ENCODE measurements at regions of chr6 and their contacts with region 1.

Region 1: DNA sequence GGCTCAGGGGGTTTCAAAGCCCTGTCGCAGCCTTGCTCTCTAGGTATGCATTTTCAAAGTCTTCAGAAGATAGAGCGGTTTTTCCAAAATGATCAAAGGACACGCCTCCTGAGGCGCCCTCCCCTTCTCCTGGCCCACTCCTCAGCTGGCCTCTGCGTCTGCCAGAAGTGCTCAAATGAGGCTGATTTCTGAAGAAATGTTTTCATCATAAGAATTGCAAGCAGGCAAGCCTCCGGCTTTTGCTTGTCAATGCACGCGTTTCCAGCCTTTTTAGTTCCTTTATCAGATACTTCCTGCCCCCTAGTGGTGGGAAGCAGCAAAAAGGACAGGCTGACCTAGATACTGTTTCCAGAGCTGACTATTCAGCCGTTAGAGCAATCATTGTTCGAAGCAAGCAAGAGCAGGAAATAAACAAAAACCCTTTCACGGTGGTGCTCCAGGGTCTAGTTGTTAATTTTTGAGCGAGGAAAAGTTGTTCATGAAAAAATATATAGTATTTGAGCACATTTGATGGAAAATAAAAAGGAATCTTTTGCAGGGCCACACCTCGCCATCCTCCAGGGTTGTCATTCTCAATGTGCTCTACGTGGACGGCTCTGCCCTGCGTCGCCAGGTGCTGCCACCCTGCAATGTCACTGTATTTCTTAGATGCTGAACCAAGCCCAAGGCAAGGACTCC is 93.4 kb upstream of the ASF1A start:
- DNase-seq: peak; percentile 95
- H3K4me3 Mint-ChIP-seq: peak overlapping the region; percentile 54
- H3K27ac Mint-ChIP-seq: peak overlapping the region; percentile 46
- H3K4me1 Mint-ChIP-seq: peaks cover 30% of the 10 kb centered on the region
- H3K27me3 Mint-ChIP-seq: no peaks in the 10 kb centered on the region

Region 2: DNA sequence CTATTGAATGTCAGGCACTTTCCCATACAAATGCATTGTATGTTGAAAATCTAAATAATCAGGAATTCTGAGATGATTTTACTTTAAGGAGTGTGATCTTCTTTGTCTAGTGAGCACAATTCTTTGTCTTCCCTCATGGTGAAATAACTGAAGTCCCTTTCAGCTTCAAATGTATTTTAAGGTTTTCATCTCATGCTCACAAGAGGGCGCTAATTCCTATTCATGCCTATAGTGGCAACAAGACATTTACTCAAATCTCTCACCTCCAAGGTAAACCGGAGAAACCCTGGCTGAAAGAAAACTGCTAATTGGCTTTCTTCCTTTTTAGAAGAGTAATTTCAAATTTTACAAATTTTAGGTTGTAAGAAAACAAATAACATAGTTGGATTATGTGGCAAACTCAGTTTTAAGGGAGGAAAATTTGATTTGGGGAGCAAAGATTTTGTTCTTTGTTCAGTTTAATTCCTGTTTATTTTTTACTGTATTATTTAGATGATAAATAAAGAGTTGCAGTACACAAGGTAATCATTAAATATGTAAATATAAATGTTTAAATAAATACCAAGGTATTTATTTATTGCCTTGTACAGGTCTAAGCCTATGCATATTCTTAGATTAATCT is 824.4 kb before region 1 on chr6:
- CTCF ChIA-PET with region 1: no interaction called
- intact Hi-C with region 1: loop called (anchors 5 kb)
- DNase-seq: peak; percentile 17
- H3K4me3 Mint-ChIP-seq: no peak overlapping the region
- H3K27ac Mint-ChIP-seq: no peak overlapping the region
- H3K4me1 Mint-ChIP-seq: no peaks in the 10 kb centered on the region
- H3K27me3 Mint-ChIP-seq: peaks cover 8% of the 10 kb centered on the region

Region 3: GRCh38 chr6:118485601-118486550 is 314.7 kb before region 1 on chr6:
- CTCF ChIA-PET with region 1: no interaction called
- intact Hi-C with region 1: loop called (anchors 5 kb)
- DNase-seq: peak; percentile 13
- H3K4me3 Mint-ChIP-seq: no peak overlapping the region
- H3K27ac Mint-ChIP-seq: no peak overlapping the region
- H3K4me1 Mint-ChIP-seq: peaks cover 27% of the 10 kb centered on the region
- H3K27me3 Mint-ChIP-seq: no peaks in the 10 kb centered on the region

Region 4: DNA sequence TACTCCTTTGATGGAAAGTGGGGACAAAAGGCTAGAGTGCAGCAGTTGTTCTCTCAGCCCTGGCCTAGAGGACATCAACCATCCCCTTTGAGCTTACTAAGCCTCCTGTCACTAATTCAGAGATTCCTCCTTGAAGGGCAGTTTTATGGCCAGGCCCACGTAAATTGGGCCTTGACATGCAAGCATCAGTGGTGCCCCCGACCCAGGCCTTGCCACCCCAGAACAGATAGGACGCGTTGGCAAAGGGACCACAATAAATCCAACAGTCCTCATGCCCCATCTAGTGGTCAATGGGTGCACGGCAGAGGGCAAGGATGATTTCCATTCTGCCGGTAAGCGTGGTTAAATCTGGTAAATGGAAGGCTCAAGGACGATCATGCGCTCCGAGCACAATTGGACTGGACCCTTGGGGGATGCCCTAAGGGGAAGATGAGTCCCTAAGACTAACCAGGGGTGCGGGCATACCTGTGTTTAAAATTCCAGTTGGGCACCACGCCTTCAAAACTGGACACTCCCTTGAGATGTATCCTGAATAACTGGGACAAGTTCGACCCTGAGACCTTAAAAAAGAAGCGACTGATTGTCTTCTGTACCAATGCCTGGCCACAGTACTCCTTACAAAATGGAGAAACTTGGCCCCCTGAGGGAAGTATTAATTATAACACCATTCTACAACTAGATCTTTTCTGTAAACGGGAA is 181.7 kb before region 1 on chr6:
- CTCF ChIA-PET with region 1: no interaction called
- intact Hi-C with region 1: loop called (anchors 1 kb)
- DNase-seq: peak; percentile 81
- H3K4me3 Mint-ChIP-seq: no peak overlapping the region
- H3K27ac Mint-ChIP-seq: no peak overlapping the region
- H3K4me1 Mint-ChIP-seq: peaks cover 50% of the 10 kb centered on the region
- H3K27me3 Mint-ChIP-seq: no peaks in the 10 kb centered on the region

Region 5: GRCh38 chr6:118697554-118697953 is 103.0 kb before region 1 on chr6:
- CTCF ChIA-PET with region 1: interaction called, 6 read pairs
- intact Hi-C with region 1: loop called (anchors 1 kb)
- DNase-seq: peak; percentile 41
- H3K4me3 Mint-ChIP-seq: no peak overlapping the region
- H3K27ac Mint-ChIP-seq: no peak overlapping the region
- H3K4me1 Mint-ChIP-seq: peaks cover 73% of the 10 kb centered on the region
- H3K27me3 Mint-ChIP-seq: no peaks in the 10 kb centered on the region

Region 6: DNA sequence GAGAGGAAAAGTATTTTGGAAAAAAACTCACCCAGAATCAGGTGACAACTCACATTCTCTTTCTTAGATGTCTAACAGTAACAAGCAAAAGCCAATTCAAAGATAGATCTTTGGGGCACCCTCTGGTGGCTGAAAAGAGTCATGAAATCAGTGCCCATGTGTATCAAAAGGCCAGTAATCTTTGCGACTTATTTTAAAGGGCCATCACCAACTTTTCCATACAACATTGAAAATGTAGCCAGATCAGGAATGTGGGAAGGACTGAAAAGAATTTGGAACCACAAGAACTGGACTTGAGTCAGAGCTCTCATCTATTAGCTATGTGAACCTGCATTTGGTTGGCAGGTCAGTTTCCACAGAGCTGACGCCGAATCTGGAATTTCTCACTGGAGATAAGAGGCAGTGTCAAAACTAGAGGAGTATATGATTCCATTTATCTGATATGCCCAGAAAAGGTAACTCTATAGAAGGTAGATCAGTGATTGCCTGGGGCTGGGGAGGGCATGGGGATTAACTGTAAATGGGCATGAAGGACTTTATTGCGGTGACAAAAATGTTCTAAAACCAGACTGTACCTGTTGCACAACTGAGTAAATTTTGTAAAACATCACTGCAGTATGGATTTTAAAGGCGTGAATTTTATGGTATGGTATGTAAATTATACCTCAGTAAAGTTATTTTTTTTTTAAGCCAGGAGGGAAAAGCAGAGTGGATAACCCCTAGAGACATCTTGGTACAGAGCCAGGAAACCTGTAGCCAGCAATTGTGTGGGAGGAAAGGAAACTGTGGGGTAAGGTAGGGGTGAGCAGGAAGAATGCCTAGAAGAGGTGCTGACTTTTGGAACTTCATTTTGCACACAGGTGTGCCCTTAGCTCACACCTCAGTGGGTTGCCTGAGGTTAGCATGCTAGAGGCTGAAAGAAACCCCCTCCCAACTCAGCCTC is 23.7 kb before region 1 on chr6:
- CTCF ChIA-PET with region 1: interaction called, 10 read pairs
- intact Hi-C with region 1: loop called (anchors 1 kb)
- DNase-seq: peak; percentile 85
- H3K4me3 Mint-ChIP-seq: no peak overlapping the region
- H3K27ac Mint-ChIP-seq: peak overlapping the region; percentile 47
- H3K4me1 Mint-ChIP-seq: peaks cover 23% of the 10 kb centered on the region
- H3K27me3 Mint-ChIP-seq: no peaks in the 10 kb centered on the region

Region 7: DNA sequence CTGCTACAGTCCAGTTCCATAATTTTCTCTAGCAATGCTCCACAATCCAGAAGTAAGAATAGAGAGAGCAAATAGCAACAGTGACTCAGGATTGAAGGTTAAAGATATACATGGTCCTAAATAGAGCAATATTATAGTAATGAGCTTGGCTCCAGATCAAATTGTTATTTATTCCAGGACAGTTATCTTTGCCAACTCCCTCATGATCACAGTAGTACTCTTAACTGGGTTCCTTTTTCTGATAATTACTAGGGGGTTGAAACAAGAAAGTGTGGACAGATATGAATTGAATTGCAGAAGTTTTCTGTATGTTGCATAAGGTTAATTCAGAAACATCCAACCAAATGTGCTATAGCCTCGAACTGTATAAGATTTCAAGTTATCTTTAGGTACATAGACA is 266.0 kb after region 1 on chr6:
- CTCF ChIA-PET with region 1: no interaction called
- intact Hi-C with region 1: no loop called
- DNase-seq: no peak
- H3K4me3 Mint-ChIP-seq: no peak overlapping the region
- H3K27ac Mint-ChIP-seq: no peak overlapping the region
- H3K4me1 Mint-ChIP-seq: peaks cover 9% of the 10 kb centered on the region
- H3K27me3 Mint-ChIP-seq: no peaks in the 10 kb centered on the region

Region 8: DNA sequence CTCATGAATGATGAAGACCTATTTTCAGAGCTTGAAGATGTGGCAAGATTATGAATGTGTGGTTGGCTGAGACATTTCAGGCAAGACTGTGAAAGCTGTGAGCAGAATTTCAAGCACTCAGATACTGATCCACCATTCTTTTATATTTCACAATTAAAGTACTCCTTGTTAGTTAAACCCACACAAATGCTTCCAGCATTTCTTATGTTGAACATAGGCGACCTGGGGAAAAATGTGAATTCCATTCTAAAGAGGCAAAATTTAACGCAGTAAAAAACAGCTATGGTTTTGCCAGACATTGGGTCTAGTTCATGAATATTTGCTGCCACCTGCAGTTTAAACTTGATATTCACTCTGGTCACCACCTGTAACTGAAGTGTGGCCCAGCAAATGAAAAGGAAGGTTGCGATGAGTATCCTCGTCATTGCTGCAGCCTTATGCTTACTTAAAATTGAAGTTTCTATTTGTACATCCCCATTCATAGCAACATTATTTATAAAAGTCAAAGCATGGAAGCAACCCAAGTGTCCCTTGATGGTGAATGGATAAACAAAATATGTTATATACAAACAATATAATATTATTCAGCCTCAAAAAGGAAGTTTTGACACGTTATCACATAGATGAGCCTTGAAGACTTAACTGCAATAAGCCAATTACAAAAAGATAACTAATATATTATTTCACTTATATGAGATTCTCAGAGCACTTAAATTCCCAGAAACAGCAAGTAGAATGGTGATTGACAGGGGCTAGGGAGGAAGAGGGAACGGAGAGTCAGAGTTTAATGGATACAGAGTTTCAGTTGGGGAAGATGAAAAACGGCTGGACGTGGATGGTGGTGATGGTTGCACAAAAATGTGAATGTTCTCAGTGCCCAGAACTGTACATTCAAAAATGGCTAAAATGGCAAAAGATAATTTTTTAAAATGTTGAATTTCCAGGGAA is 310.3 kb after region 1 on chr6:
- CTCF ChIA-PET with region 1: interaction called, 6 read pairs
- intact Hi-C with region 1: loop called (anchors 1 kb)
- DNase-seq: peak; percentile 62
- H3K4me3 Mint-ChIP-seq: no peak overlapping the region
- H3K27ac Mint-ChIP-seq: no peak overlapping the region
- H3K4me1 Mint-ChIP-seq: peaks cover 22% of the 10 kb centered on the region
- H3K27me3 Mint-ChIP-seq: no peaks in the 10 kb centered on the region

Measured in activated naive CD4-positive, alpha-beta T cell treated with anti-CD3 and anti-CD28 coated beads for 36 hours (primary cell).